Natural killer cell (primary cell): ENCODE measurements at regions of chr5 and their contacts with region 1.

Region 1: DNA sequence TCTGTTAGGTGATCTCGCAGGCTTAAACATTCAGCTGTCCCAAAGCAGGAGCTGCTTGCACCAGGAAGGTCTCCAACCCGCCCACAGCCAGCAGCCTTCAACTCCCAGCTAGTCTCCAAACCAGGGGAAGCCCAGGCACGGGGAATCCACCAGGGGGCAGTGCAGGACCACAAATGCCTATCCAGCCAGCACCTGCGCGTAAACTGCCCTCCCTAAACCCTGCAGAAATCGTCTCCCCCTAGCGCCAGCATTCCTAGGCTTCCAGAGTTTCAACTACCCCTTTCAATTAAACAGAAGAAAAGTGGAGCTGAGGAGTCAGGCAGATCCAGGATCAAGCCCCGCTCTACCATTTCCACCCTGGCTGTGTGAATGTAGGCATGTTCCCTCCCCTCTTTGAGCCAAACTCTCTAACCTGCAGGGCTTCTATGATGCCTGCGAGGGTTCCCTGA is 72.0 kb downstream of the HRH2 start:
- DNase-seq: peak; percentile 83 to 92
- ATAC-seq: peak; percentile 82 to 96 (median 86)
- H3K4me3 ChIP-seq: no peak overlapping the region
- H3K4me3 Mint-ChIP-seq: no peak overlapping the region
- H3K27ac ChIP-seq: no peak overlapping the region
- H3K27ac Mint-ChIP-seq: no peak overlapping the region
- H3K4me1 ChIP-seq: peaks cover 7% of the 10 kb centered on the region
- H3K4me1 Mint-ChIP-seq: peaks cover 7% of the 10 kb centered on the region in 2 donors
- H3K27me3 ChIP-seq: peaks cover 6% of the 10 kb centered on the region
- H3K27me3 Mint-ChIP-seq: peaks cover 29 to 32% of the 10 kb centered on the region in 2 donors
- CTCF ChIP-seq: peak; percentile 92

Region 2: GRCh38 chr5:175657593-175658271 is 72.1 kb before region 1 on chr5 and contains the start of gene HRH2:
- intact Hi-C with region 1: no loop called
- DNase-seq: peak in 1 of 2 donors; percentile 63
- ATAC-seq: peak in 2 of 3 donors; percentile 57 to 58
- H3K4me3 ChIP-seq: peak within 1 kb of the TSS; percentile 39
- H3K4me3 Mint-ChIP-seq: peak within 1 kb of the TSS; percentile 90
- H3K27ac ChIP-seq: no peak within 1 kb of the TSS
- H3K27ac Mint-ChIP-seq: no peak within 1 kb of the TSS
- H3K4me1 ChIP-seq: peaks cover 44% of the 10 kb centered on the region
- H3K4me1 Mint-ChIP-seq: peaks cover 22 to 27% of the 10 kb centered on the region in 2 donors
- H3K27me3 ChIP-seq: peaks cover 21% of the 10 kb centered on the region
- H3K27me3 Mint-ChIP-seq: peaks cover 45 to 52% of the 10 kb centered on the region in 2 donors
- CTCF ChIP-seq: no peak
- total RNA-seq, gene HRH2: 1.4 to 13.9 (median 3.1) TPM

Region 3: DNA sequence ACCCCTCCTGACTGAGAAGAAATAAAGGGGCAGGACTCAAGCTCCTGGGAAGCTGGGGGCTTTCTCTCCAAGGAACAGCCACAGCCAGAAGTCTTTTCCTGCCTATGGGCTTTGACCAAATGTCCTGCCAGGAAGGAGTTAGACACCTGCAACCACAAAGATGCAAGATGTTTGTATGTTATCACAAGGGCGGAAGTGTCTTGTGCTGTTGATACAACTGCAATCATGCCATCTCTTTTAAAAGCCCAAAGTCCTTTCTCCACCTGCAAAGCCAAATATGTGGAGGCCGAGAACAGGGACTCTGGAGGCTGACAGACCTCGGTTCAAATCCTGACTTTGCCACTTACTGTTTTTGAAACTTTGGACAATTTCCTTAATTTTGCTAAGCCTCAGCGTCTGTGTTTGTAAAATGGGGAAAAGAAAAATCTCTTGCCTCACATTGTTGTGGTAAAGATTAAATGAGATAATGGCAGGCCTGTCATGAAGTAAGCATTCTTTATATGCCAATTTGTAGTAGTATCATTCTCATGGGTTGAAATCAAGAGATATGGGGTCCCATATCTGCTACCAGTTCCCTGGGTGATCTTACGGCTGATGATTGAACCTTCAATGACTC is 55.0 kb before region 1 on chr5:
- intact Hi-C with region 1: no loop called
- DNase-seq: no peak
- ATAC-seq: peak in 1 of 3 donors; percentile 54
- H3K4me3 ChIP-seq: no peak overlapping the region
- H3K4me3 Mint-ChIP-seq: no peak overlapping the region
- H3K27ac ChIP-seq: no peak overlapping the region
- H3K27ac Mint-ChIP-seq: no peak overlapping the region
- H3K4me1 ChIP-seq: peaks cover 3% of the 10 kb centered on the region
- H3K4me1 Mint-ChIP-seq: peaks cover 0 to 10% of the 10 kb centered on the region in 2 donors
- H3K27me3 ChIP-seq: no peaks in the 10 kb centered on the region
- H3K27me3 Mint-ChIP-seq: peaks cover 8 to 11% of the 10 kb centered on the region in 2 donors
- CTCF ChIP-seq: no peak

Region 4: GRCh38 chr5:175689147-175689991 is 40.5 kb before region 1 on chr5:
- intact Hi-C with region 1: no loop called
- DNase-seq: peak in 1 of 2 donors; percentile 11
- ATAC-seq: peak in 2 of 3 donors; percentile 21 to 59
- H3K4me3 ChIP-seq: no peak overlapping the region
- H3K4me3 Mint-ChIP-seq: no peak overlapping the region
- H3K27ac ChIP-seq: peak overlapping the region; percentile 8
- H3K27ac Mint-ChIP-seq: no peak overlapping the region
- H3K4me1 ChIP-seq: peaks cover 18% of the 10 kb centered on the region
- H3K4me1 Mint-ChIP-seq: peaks cover 0 to 3% of the 10 kb centered on the region in 2 donors
- H3K27me3 ChIP-seq: no peaks in the 10 kb centered on the region
- H3K27me3 Mint-ChIP-seq: peaks cover 12 to 13% of the 10 kb centered on the region in 2 donors
- CTCF ChIP-seq: no peak

Region 5: GRCh38 chr5:176573564-176574296 is 843.9 kb after region 1 on chr5:
- intact Hi-C with region 1: loop called (anchors 10 kb)
- DNase-seq: peak; percentile 74 to 86
- ATAC-seq: peak; percentile 78 to 93 (median 92)
- H3K4me3 ChIP-seq: no peak overlapping the region
- H3K4me3 Mint-ChIP-seq: no peak overlapping the region
- H3K27ac ChIP-seq: no peak overlapping the region
- H3K27ac Mint-ChIP-seq: no peak overlapping the region
- H3K4me1 ChIP-seq: peaks cover 7% of the 10 kb centered on the region
- H3K4me1 Mint-ChIP-seq: peaks cover 0 to 12% of the 10 kb centered on the region in 2 donors
- H3K27me3 ChIP-seq: no peaks in the 10 kb centered on the region
- H3K27me3 Mint-ChIP-seq: peaks cover 0 to 10% of the 10 kb centered on the region in 2 donors
- CTCF ChIP-seq: peak; percentile 88

Region 6: DNA sequence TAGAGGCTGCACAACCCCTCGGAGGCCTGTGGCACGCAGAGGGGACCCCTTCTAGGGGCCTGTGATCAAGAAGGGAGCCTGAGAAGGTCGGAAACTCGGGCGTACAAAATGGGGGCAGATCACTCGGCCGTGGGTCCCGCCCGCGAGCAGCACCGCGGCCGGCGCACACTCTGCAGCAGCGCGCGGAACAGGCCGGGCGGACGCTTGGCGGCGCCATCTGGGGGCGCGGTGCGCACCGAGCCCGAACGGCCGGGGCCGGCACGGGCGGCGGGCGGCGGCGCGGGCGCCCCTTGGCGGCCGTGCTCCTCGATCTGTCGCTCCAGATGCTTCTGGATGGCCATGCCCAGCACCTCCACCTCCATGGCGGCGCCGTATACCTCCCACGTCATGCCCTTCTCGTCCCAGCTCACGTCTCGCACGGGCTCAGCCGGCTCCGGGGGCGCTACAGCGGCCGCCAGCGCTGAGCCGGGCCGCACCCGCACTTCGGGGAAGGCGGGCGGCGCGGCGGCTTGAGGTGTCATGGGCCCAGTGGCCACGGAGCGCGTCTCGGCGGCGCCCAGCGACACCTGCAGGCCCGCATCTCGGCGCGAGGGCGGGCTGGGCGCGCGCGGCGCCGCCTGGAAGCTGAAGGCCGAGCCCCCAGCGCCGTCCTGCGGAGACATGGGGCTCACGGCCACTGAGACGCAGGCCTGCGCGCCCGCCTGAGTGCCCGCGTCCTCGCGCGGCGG is 867.0 kb after region 1 on chr5:
- intact Hi-C with region 1: loop called (anchors 2 kb)
- DNase-seq: peak; percentile 35 to 84
- ATAC-seq: peak; percentile 65 to 87 (median 83)
- H3K4me3 ChIP-seq: no peak overlapping the region
- H3K4me3 Mint-ChIP-seq: peak overlapping the region; percentile 80
- H3K27ac ChIP-seq: no peak overlapping the region
- H3K27ac Mint-ChIP-seq: peak overlapping the region in 1 of 2 donors; percentile 38
- H3K4me1 ChIP-seq: peaks cover 6% of the 10 kb centered on the region
- H3K4me1 Mint-ChIP-seq: peaks cover 0 to 7% of the 10 kb centered on the region in 2 donors
- H3K27me3 ChIP-seq: no peaks in the 10 kb centered on the region
- H3K27me3 Mint-ChIP-seq: peaks cover 0 to 21% of the 10 kb centered on the region in 2 donors
- CTCF ChIP-seq: peak; percentile 18